H1 (cell line): ENCODE measurements at regions of chr21 and their contacts with region 1.

Region 1: DNA sequence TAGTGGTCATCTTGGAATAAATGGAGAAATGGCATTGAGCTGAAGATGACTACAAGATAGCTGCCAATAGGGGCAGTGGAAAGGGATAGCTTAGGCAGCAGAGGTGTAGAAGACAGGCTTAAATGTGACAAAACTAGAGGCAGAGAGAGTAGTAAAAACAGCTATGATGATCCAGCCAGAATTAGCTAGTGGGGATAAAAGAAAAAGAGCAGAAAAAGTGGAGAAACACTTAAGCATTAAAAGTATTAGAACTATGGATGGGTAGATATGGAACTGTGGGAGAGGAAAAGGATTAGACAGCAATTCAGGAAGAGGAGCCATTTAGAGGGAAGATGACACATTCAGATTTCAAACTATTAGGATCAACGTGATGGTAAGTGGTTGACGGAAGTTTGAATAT is 202.5 kb upstream of the SAMSN1 start:
- DNase-seq: no peak
- H3K4me3 ChIP-seq: no peak overlapping the region
- H3K27ac ChIP-seq: no peak overlapping the region
- H3K4me1 ChIP-seq: no peaks in the 10 kb centered on the region
- H3K27me3 ChIP-seq: peaks cover 0 to 1% (median 0%) of the 10 kb centered on the region in 4 experiments; a peak in 1 of 7 replicates
- CTCF ChIP-seq: no peak
- EP300 ChIP-seq: no peak
- POLR2A ChIP-seq: no peak
- RAD21 ChIP-seq: no peak

Region 2: GRCh38 chr21:14737922-14738321 is 10.7 kb before region 1 on chr21:
- CTCF ChIA-PET with region 1: interaction called, 10 read pairs
- POLR2A ChIA-PET with region 1: no interaction called
- DNase-seq: no peak
- H3K4me3 ChIP-seq: no peak overlapping the region
- H3K27ac ChIP-seq: no peak overlapping the region
- H3K4me1 ChIP-seq: no peaks in the 10 kb centered on the region
- H3K27me3 ChIP-seq: no peaks in the 10 kb centered on the region
- CTCF ChIP-seq: peak in 2 of 3 experiments; percentile 39 to 69; a peak in 2 of 4 replicates
- EP300 ChIP-seq: no peak
- POLR2A ChIP-seq: no peak
- RAD21 ChIP-seq: peak; percentile 71 to 75